Activated CD4-positive, alpha-beta T cell treated with anti-CD3 and anti-CD28 coated beads for 36 hours (primary cell): ENCODE measurements at regions of chr2 and their contacts with region 1.

Region 1: GRCh38 chr2:191114403-191114886 is 36.3 kb downstream of the STAT4 start:
- DNase-seq: peak; percentile 49
- ATAC-seq: peak; percentile 22
- H3K4me3 Mint-ChIP-seq: peak overlapping the region; percentile 30
- H3K27ac Mint-ChIP-seq: peak overlapping the region; percentile 82
- H3K4me1 Mint-ChIP-seq: peaks cover 62% of the 10 kb centered on the region
- H3K27me3 Mint-ChIP-seq: no peaks in the 10 kb centered on the region

Region 2: DNA sequence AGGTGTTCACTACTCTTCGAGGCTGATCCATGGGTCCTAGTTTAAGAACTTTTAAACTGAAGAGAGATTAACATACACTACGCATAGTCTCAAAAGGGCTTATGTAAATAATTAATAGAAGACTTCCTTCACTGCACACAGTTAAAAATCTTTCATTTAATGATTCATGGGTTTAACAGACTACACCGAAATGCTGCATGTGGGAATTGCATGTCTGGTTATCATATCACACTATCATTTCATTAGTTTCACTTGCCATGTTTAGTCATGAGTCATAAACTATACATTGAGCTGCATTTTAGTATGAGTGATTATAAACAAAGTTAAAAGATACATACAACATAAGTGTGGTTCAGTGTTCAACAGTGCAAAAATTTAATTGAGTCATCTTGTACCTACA is 202.6 kb before region 1 on chr2:
- CTCF ChIA-PET with region 1: no interaction called
- POLR2A ChIA-PET with region 1: no interaction called
- intact Hi-C with region 1: loop called in 1 of 2 experiments (anchors 10 kb)
- DNase-seq: no peak
- ATAC-seq: peak; percentile 94
- H3K4me3 Mint-ChIP-seq: no peak overlapping the region
- H3K27ac Mint-ChIP-seq: peak overlapping the region; percentile 73
- H3K4me1 Mint-ChIP-seq: peaks cover 46% of the 10 kb centered on the region
- H3K27me3 Mint-ChIP-seq: no peaks in the 10 kb centered on the region

Region 3: GRCh38 chr2:191059308-191059707 is 55.1 kb before region 1 on chr2:
- CTCF ChIA-PET with region 1: interaction called, 17 read pairs
- POLR2A ChIA-PET with region 1: no interaction called
- intact Hi-C with region 1: loop called (anchors 1 to 2 kb)
- DNase-seq: no peak
- ATAC-seq: peak; percentile 89
- H3K4me3 Mint-ChIP-seq: no peak overlapping the region
- H3K27ac Mint-ChIP-seq: no peak overlapping the region
- H3K4me1 Mint-ChIP-seq: peaks cover 63% of the 10 kb centered on the region
- H3K27me3 Mint-ChIP-seq: no peaks in the 10 kb centered on the region

Region 4: GRCh38 chr2:191128172-191128910 is 13.9 kb after region 1 on chr2:
- CTCF ChIA-PET with region 1: interaction called, 5 read pairs
- POLR2A ChIA-PET with region 1: no interaction called
- intact Hi-C with region 1: loop called in 1 of 2 experiments (anchors 2 kb)
- DNase-seq: no peak
- ATAC-seq: peak; percentile 87
- H3K4me3 Mint-ChIP-seq: no peak overlapping the region
- H3K27ac Mint-ChIP-seq: peak overlapping the region; percentile 32
- H3K4me1 Mint-ChIP-seq: peaks cover 49% of the 10 kb centered on the region
- H3K27me3 Mint-ChIP-seq: no peaks in the 10 kb centered on the region

Region 5: DNA sequence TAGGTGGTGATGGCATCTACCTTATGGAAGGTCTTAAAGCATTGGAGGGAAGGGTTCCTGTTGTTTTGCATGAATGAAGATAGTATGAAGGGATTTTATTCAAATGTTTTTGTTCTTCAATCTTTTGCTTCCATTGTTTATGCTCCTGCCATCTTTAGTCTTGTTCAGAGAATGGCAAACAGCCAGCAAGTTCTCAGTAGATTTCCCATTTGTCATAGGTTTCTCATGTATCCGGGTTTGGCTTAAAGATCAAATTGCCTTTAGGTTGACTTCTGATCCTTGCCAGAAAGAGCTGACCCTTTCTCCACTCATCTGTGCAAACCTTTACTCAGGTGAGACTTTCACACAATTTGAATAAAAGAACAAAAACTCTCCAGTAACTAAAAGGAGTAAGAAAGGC is 80.6 kb after region 1 on chr2:
- CTCF ChIA-PET with region 1: interaction called, 4 read pairs
- POLR2A ChIA-PET with region 1: interaction called, 3 read pairs
- intact Hi-C with region 1: loop called (anchors 1 to 2 kb)
- DNase-seq: no peak
- ATAC-seq: no peak
- H3K4me3 Mint-ChIP-seq: no peak overlapping the region
- H3K27ac Mint-ChIP-seq: peak overlapping the region; percentile 98
- H3K4me1 Mint-ChIP-seq: peaks cover 57% of the 10 kb centered on the region
- H3K27me3 Mint-ChIP-seq: no peaks in the 10 kb centered on the region